ENCODE measurements at regions of chr19 and their contacts with region 1.

Region 1: GRCh38 chr19:47348819-47349795 is at the start of gene DHX34:
- DNase-seq: peak; percentile 99
- H3K4me3 ChIP-seq: peak within 1 kb of the TSS; percentile 95
- H3K27ac ChIP-seq: peak within 1 kb of the TSS; percentile 48; the same call in 1 of the 2 replicates
- H3K4me1 ChIP-seq: peaks cover 14% of the 10 kb centered on the region
- H3K27me3 ChIP-seq: no peaks in the 10 kb centered on the region
- CTCF ChIP-seq: peak; percentile 99
- total RNA-seq, gene DHX34: 23.0 TPM in 2 replicates

Region 2: DNA sequence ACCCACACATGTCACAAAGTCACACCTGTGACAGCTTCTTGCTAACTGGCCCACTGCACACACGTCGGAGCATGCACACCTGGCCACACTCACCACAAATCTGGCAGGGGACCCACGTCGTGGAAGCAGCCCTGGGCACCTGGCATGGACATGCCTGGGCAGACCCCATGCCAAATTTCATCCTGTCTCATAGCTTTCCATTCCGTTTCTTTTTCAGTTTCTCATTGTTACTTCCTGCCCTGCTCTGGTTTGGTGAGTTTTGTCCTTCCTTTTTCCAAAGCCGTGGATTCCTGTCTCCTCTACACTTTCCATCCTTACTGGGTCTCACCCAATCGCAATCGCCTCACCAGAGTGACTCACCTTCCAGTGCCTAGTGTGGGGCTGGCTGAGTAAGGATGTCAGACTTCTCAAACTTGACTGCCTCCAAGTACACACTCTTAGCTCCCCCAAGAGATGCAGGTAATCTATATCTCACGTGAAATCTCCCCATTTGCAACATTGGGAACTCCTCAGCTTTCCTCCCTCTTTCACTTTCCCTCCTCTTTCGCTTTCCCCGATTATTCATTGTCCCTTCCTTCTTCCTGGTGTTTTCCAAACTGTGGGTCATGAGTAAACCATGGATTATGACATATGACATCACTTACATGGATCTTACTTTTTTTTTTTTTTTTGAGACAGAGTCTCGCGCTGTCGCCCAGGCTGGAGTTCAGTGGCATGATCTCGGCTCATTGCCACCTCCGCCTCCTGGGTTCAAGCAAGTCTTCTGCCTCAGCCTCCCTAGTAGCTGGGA is 116.5 kb before region 1 on chr19:
- CTCF ChIA-PET with region 1: interaction called, 15 read pairs
- POLR2A ChIA-PET with region 1: no interaction called
- intact Hi-C with region 1: no loop called
- DNase-seq: peak; percentile 34 to 74
- H3K4me3 ChIP-seq: peak overlapping the region; percentile 99; the same call in 1 of the 2 replicates
- H3K27ac ChIP-seq: peak overlapping the region; percentile 68
- H3K4me1 ChIP-seq: peaks cover 37% of the 10 kb centered on the region
- H3K27me3 ChIP-seq: no peaks in the 10 kb centered on the region
- CTCF ChIP-seq: no peak

Region 3: GRCh38 chr19:47305309-47305751 is 43.8 kb before region 1 on chr19:
- CTCF ChIA-PET with region 1: interaction called, 6 read pairs
- POLR2A ChIA-PET with region 1: no interaction called
- intact Hi-C with region 1: loop called (anchors 5 kb)
- DNase-seq: peak; percentile 64 to 65
- H3K4me3 ChIP-seq: peak overlapping the region; percentile 7; the same call in 1 of the 2 replicates
- H3K27ac ChIP-seq: no peak overlapping the region
- H3K4me1 ChIP-seq: peaks cover 15% of the 10 kb centered on the region
- H3K27me3 ChIP-seq: no peaks in the 10 kb centered on the region
- CTCF ChIP-seq: peak; percentile 99

Region 4: DNA sequence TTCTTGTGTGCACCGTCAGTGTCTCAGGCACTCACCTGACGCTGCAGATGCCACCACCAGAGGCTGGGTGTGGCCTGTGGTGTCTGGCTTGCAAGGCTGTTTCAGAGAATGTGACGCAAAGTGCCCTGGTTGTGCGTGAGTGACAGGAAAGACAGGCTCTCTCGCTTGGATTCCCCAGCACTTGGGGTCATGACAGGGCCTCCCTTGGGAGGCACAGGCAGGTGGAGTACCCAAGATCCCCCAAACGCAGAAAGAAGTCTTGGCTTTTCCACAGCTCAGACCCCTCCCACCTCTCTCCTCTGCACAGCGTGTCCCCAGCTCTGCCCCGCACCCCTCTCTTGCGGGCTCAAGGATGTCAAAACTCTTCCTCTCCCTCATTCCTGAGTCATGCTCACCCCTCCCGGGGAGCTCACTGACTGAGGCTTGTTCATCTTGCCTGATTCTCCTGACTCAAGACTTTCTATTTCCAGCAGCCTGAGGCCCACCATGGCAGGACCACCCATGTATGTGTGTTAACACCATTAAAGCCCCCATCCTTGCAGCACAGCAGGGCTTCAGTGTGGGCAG is 21.0 kb after region 1 on chr19:
- CTCF ChIA-PET with region 1: interaction called, 9 read pairs
- POLR2A ChIA-PET with region 1: interaction called, 10 read pairs
- intact Hi-C with region 1: no loop called
- DNase-seq: peak in 1 of 2 experiments; percentile 54
- H3K4me3 ChIP-seq: no peak overlapping the region
- H3K27ac ChIP-seq: no peak overlapping the region
- H3K4me1 ChIP-seq: no peaks in the 10 kb centered on the region
- H3K27me3 ChIP-seq: no peaks in the 10 kb centered on the region
- CTCF ChIP-seq: no peak

Region 5: DNA sequence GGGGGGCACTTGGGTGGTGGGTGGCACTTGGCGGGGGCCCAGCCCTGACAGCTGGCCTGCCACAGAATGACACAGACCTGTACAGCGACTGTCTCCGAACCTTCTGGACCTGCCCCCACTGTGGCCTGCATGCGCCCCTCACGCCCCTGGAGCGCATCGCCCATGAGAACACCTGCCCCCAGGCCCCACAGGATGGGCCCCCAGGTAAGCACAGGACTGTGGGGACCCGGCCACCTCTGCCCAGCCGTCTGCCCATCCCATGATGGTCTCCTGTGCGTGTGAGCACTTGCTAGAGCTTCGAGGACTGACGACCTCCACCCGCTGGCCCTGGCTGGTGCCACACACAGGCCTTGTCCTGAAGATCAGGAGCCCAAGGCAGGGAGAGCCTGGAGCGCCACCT is 32.0 kb after region 1 on chr19:
- CTCF ChIA-PET with region 1: no interaction called
- POLR2A ChIA-PET with region 1: no interaction called
- intact Hi-C with region 1: no loop called
- DNase-seq: no peak
- H3K4me3 ChIP-seq: no peak overlapping the region
- H3K27ac ChIP-seq: no peak overlapping the region
- H3K4me1 ChIP-seq: no peaks in the 10 kb centered on the region
- H3K27me3 ChIP-seq: no peaks in the 10 kb centered on the region
- CTCF ChIP-seq: no peak

Region 6: GRCh38 chr19:47428177-47428894 is 79.2 kb after region 1 on chr19:
- CTCF ChIA-PET with region 1: interaction called, 18 read pairs
- POLR2A ChIA-PET with region 1: no interaction called
- intact Hi-C with region 1: no loop called
- DNase-seq: peak; percentile 88 to 92
- H3K4me3 ChIP-seq: peak overlapping the region; percentile 33; the same call in 1 of the 2 replicates
- H3K27ac ChIP-seq: 0 out of 2 replicates have a peak overlapping the region, but pooled peaks have one; percentile 19
- H3K4me1 ChIP-seq: peaks cover 22% of the 10 kb centered on the region
- H3K27me3 ChIP-seq: peaks cover 18% of the 10 kb centered on the region
- CTCF ChIP-seq: no peak